Activated CD4-positive, alpha-beta T cell treated with anti-CD3 and anti-CD28 coated beads for 36 hours (primary cell): ENCODE measurements at regions of chr3 and their contacts with region 1.

Region 1: DNA sequence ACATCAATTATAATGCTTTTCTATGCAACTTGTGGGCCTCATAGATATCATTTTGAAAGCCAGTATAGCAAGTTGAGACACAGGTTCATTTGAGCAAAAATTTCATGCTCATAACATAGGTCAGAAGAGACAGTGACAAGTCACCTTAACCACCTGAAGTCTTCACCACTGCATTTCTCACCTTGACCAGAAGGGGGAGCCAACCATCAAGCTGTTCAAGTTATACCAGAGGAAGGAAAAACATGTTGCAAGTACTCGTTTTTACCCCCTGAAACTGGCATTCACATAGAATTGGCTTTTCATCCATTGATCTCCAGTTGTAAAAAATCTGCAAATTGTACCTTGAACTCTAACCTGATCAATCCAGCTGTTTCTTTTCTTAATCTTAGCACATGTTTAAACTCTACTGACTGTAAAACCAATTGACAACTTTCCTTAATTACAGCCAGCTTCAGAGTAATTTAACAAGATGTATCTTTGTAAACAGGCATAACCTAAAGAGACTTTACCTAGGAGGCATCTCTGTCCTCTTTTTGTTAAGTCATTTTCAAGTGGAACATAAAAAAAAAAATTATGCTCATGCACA is 1.4 kb downstream of the LMOD3 start:
- DNase-seq: peak; percentile 89
- ATAC-seq: peak; percentile 78
- H3K4me3 Mint-ChIP-seq: no peak overlapping the region
- H3K27ac Mint-ChIP-seq: no peak overlapping the region
- H3K4me1 Mint-ChIP-seq: peaks cover 3% of the 10 kb centered on the region
- H3K27me3 Mint-ChIP-seq: no peaks in the 10 kb centered on the region

Region 2: GRCh38 chr3:69092030-69092516 is 28.9 kb before region 1 on chr3:
- CTCF ChIA-PET with region 1: interaction called, 18 read pairs
- POLR2A ChIA-PET with region 1: no interaction called
- intact Hi-C with region 1: no loop called
- DNase-seq: peak; percentile 33
- ATAC-seq: peak; percentile 70
- H3K4me3 Mint-ChIP-seq: peak overlapping the region; percentile 56
- H3K27ac Mint-ChIP-seq: peak overlapping the region; percentile 98
- H3K4me1 Mint-ChIP-seq: peaks cover 85% of the 10 kb centered on the region
- H3K27me3 Mint-ChIP-seq: no peaks in the 10 kb centered on the region

Region 3: GRCh38 chr3:69137011-69137410 is 16.0 kb after region 1 on chr3:
- CTCF ChIA-PET with region 1: interaction called, 23 read pairs
- POLR2A ChIA-PET with region 1: no interaction called
- intact Hi-C with region 1: no loop called
- DNase-seq: no peak
- ATAC-seq: no peak
- H3K4me3 Mint-ChIP-seq: no peak overlapping the region
- H3K27ac Mint-ChIP-seq: no peak overlapping the region
- H3K4me1 Mint-ChIP-seq: no peaks in the 10 kb centered on the region
- H3K27me3 Mint-ChIP-seq: peaks cover 2% of the 10 kb centered on the region

Region 4: DNA sequence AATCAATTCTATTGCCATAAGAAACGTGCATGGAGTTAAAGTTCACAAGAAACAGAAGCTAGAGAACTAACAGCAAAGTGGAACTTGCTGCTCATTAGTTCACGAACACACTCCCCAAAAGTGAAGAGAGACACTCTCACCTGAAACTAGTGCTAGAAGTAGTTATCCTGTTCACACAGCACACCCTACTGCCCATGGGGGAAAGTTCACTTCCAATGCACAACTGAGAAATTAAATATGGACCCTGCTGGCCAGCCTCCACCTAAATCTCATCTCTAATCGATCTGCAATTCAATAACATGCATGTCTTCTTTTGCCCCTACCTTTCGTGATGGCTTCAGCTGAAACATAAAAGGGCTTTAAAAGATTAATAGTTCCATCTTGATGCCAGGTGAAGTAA is 304.3 kb after region 1 on chr3:
- CTCF ChIA-PET with region 1: interaction called, 6 read pairs
- POLR2A ChIA-PET with region 1: interaction called, 3 read pairs
- intact Hi-C with region 1: loop called in 1 of 2 experiments (anchors 1 kb)
- DNase-seq: peak; percentile 52
- ATAC-seq: peak; percentile 74
- H3K4me3 Mint-ChIP-seq: no peak overlapping the region
- H3K27ac Mint-ChIP-seq: no peak overlapping the region
- H3K4me1 Mint-ChIP-seq: peaks cover 2% of the 10 kb centered on the region
- H3K27me3 Mint-ChIP-seq: peaks cover 5% of the 10 kb centered on the region

Region 5: GRCh38 chr3:69948246-69948862 is 827.4 kb after region 1 on chr3:
- CTCF ChIA-PET with region 1: no interaction called
- POLR2A ChIA-PET with region 1: no interaction called
- intact Hi-C with region 1: loop called in 1 of 2 experiments (anchors 5 kb)
- DNase-seq: no peak
- ATAC-seq: no peak
- H3K4me3 Mint-ChIP-seq: no peak overlapping the region
- H3K27ac Mint-ChIP-seq: no peak overlapping the region
- H3K4me1 Mint-ChIP-seq: no peaks in the 10 kb centered on the region
- H3K27me3 Mint-ChIP-seq: peaks cover 2% of the 10 kb centered on the region